IMR-90 (cell line): ENCODE measurements at regions of chr17 and their contacts with region 1.

Region 1: GRCh38 chr17:17041571-17042380 is 481 bp upstream of the MPRIP start:
- DNase-seq: peak; percentile 95
- ATAC-seq: peak; percentile 94
- H3K4me3 ChIP-seq: peak overlapping the region; percentile 65
- H3K27ac ChIP-seq: peak overlapping the region; percentile 76
- H3K4me1 ChIP-seq: peaks cover 18% of the 10 kb centered on the region
- H3K27me3 ChIP-seq: no peaks in the 10 kb centered on the region
- CTCF ChIP-seq: no peak
- POLR2A ChIP-seq: no peak
- RAD21 ChIP-seq: no peak

Region 2: DNA sequence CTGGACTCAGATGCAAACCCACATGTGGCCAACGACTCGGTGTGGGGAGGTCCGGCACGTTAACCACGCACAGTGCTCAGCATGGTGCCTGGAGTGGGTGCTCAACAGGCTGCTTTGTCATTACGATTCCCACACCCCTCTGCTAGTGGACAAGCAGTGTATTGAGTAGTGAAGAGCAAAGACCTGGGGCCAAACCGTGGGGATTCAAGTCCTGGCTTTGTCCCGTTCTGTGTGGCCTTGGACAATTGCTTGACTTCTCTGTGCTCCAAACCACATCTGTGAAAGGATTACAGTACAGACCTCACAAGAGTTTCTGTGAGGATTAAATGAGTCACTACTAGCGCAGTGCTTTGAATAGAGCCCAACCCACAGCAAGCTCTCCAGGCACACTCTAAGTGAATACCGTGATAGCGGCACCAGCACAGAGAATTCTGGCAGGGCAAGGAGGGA is 592.6 kb before region 1 on chr17:
- CTCF ChIA-PET with region 1: no interaction called
- POLR2A ChIA-PET with region 1: no interaction called
- dilution Hi-C with region 1: no loop called
- in situ Hi-C with region 1: no loop called
- intact Hi-C with region 1: no loop called
- DNase-seq: peak; percentile 74
- ATAC-seq: no peak
- H3K4me3 ChIP-seq: no peak overlapping the region
- H3K27ac ChIP-seq: no peak overlapping the region
- H3K4me1 ChIP-seq: no peaks in the 10 kb centered on the region
- H3K27me3 ChIP-seq: no peaks in the 10 kb centered on the region
- CTCF ChIP-seq: no peak
- POLR2A ChIP-seq: no peak
- RAD21 ChIP-seq: no peak

Region 3: DNA sequence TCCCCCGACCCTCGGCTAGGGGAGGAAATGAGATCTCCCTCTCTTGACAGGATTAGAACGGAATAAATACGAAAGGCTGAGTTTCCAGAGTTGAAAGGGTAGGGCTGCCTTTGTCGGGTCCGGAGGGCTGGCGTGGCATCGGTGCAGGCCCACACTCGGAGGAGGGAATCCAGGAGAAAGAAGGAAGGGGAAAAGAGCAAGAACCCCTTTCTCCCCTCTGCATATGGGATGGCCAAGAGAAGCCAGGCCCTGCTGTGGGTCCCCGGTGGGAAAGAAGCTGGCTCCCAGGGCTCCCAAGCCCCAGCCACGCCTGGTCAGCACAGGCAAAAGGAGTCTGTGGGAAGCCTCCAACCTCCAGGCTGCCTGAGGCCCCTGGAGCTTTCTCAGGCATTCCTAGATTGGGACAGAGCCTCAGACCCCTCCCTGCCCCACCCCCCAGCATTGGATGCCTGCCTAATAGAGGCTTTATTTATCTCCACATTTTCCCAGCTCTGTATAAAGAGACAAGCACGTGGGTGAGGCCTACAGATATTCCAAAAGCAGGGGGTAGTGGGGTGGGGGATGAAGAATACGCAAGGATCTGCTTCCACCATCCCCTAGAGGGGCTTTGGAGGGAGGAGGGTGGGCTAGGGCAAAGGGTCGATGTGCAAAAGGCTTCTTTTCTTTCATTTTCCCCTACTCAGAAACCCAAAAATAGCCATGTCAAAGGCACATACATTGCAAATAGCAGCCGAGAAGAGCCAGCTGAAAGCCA is 56.8 kb after region 1 on chr17:
- CTCF ChIA-PET with region 1: no interaction called
- POLR2A ChIA-PET with region 1: no interaction called
- dilution Hi-C with region 1: no loop called
- in situ Hi-C with region 1: no loop called
- intact Hi-C with region 1: loop called (anchors 2 kb)
- DNase-seq: peak; percentile 31
- ATAC-seq: peak; percentile 69
- H3K4me3 ChIP-seq: no peak overlapping the region
- H3K27ac ChIP-seq: peak overlapping the region; percentile 9; the same call in 1 of the 2 replicates
- H3K4me1 ChIP-seq: peaks cover 29% of the 10 kb centered on the region
- H3K27me3 ChIP-seq: no peaks in the 10 kb centered on the region
- CTCF ChIP-seq: no peak
- POLR2A ChIP-seq: no peak
- RAD21 ChIP-seq: no peak

Region 4: GRCh38 chr17:17151962-17152361 is 110.2 kb after region 1 on chr17:
- CTCF ChIA-PET with region 1: interaction called, 3 read pairs
- POLR2A ChIA-PET with region 1: no interaction called
- dilution Hi-C with region 1: no loop called
- in situ Hi-C with region 1: no loop called
- intact Hi-C with region 1: loop called (anchors 5 kb)
- DNase-seq: peak; percentile 96
- ATAC-seq: peak; percentile 85
- H3K4me3 ChIP-seq: no peak overlapping the region
- H3K27ac ChIP-seq: peak overlapping the region; percentile 60
- H3K4me1 ChIP-seq: peaks cover 28% of the 10 kb centered on the region
- H3K27me3 ChIP-seq: no peaks in the 10 kb centered on the region
- CTCF ChIP-seq: no peak
- POLR2A ChIP-seq: no peak
- RAD21 ChIP-seq: no peak